ENCODE measurements at regions of chr15 and their contacts with region 1.

Region 1: GRCh38 chr15:72722071-72722696 is 36.2 kb downstream of the BBS4 start:
- DNase-seq: peak; percentile 68

Region 2: DNA sequence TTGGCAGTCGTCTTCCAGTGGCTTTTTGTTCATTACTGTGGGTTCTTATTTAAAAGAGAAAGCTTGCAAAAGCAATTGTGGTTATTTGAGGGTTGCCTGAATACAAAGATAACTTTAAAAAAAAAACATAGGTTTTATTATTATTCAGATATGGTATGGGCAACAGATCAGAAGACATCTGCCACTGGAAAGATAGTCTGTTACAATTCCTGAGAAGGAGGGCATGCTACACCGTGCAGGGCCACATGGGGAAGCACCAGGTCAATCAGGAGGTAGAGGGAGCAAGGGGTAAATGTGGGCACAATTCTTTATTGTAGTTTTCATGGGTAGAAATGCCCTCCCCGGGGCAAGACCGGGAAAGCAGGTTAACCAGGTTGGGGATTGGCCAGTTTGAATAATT is 10.3 kb after region 1 on chr15:
- CTCF ChIA-PET with region 1: interaction called, 15 read pairs
- POLR2A ChIA-PET with region 1: interaction called, 3 read pairs
- DNase-seq: no peak

Measured in HEK293T (cell line).